Heart right ventricle (tissue), 16 donors: ENCODE measurements at regions of chr3 and their contacts with region 1.

Region 1: DNA sequence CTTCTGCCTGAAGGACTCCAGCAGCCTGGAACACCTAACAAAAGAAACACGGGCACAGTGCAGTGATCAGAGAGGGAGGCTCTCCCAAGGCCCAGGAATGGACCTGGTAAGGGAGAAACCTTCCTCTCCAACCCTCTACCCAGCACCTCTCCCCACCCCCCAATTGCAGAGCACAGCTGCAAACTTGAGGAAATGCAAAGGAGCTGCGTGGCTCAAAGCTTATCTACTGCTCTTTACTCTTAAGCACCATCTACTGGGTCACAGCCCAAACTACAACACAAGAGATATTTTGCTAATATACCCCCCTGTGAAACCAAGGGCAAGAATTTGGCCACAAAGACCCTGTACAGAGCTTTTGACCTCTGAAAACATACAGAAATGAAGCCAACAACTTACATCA is 328.3 kb downstream of the OXSM start:
- DNase-seq: no peak
- ATAC-seq: no peak
- H3K4me3 ChIP-seq: no peak overlapping the region
- H3K27ac ChIP-seq: no peak overlapping the region
- H3K4me1 ChIP-seq: peaks cover 0 to 11% (median 0%) of the 10 kb centered on the region in 9 donors
- H3K27me3 ChIP-seq: no peaks in the 10 kb centered on the region
- CTCF ChIP-seq: peak in 7 of 9 donors; percentile 10 to 51 (median 36)

Region 2: DNA sequence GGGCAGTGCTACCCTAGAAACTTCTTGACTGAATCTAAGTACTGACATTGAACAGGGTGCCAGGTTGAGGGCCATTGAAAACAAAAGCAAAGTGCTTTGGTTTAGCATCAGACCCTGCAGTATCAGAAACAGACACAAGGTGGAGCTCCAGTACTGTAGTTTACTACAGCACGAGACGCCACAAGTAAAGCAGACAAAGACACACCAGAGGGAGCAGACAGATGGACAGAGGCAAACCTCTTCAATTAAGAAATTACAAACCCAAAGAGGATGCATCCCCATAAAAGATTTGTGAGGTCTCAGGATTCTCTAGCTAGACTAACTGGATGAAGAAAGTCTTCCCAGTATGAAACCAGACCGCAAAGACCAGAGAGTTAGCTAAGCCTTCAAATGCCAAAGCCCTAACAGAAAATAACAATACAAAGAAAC is 470.0 kb before region 1 on chr3:
- intact Hi-C with region 1: loop called in 1 of 10 experiments (anchors 10 kb)
- DNase-seq: peak in 1 of 2 donors; percentile 72
- ATAC-seq: peak in 7 of 8 donors; percentile 61 to 92 (median 89)
- H3K4me3 ChIP-seq: no peak overlapping the region
- H3K27ac ChIP-seq: no peak overlapping the region
- H3K4me1 ChIP-seq: peaks cover 0 to 41% (median 21%) of the 10 kb centered on the region in 9 donors
- H3K27me3 ChIP-seq: no peaks in the 10 kb centered on the region
- CTCF ChIP-seq: peak; percentile 62 to 93 (median 88)

Region 3: GRCh38 chr3:25904206-25904605 is 214.0 kb before region 1 on chr3:
- intact Hi-C with region 1: loop called in 9 of 10 experiments (anchors 1 to 10 kb)
- DNase-seq: peak in 1 of 2 donors; percentile 30
- ATAC-seq: peak in 6 of 8 donors; percentile 66 to 92 (median 84)
- H3K4me3 ChIP-seq: no peak overlapping the region
- H3K27ac ChIP-seq: no peak overlapping the region
- H3K4me1 ChIP-seq: peaks cover 0 to 17% (median 0%) of the 10 kb centered on the region in 9 donors
- H3K27me3 ChIP-seq: no peaks in the 10 kb centered on the region
- CTCF ChIP-seq: peak; percentile 21 to 76 (median 61)

Region 4: GRCh38 chr3:26068890-26069289 is 49.3 kb before region 1 on chr3:
- intact Hi-C with region 1: no loop called
- DNase-seq: peak; percentile 7 to 39
- ATAC-seq: peak in 7 of 8 donors; percentile 42 to 97 (median 93)
- H3K4me3 ChIP-seq: no peak overlapping the region
- H3K27ac ChIP-seq: peak overlapping the region in 1 of 10 donors; percentile 41
- H3K4me1 ChIP-seq: peaks cover 0 to 15% (median 3%) of the 10 kb centered on the region in 9 donors
- H3K27me3 ChIP-seq: no peaks in the 10 kb centered on the region
- CTCF ChIP-seq: no peak

Region 5: DNA sequence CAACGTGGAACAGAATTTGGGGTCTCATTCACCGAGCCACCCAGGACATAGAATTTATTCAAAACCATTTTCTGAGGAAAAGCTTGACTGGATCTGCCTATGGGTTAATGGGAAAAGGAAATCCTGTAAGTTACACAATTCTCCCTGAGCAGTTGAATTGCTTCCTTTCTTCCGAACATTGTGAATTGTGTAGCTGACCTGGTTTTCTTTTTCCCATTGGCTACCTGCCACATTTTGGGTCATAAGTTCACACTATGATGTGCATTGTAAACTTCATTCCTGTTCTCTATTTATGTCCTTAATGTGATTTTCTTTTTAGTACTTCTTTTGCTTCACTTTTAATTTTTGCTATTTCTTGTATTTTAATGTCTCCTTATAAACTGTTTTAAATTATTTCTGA is 118.4 kb after region 1 on chr3:
- intact Hi-C with region 1: loop called in 1 of 10 experiments (anchors 5 kb)
- DNase-seq: peak in 1 of 2 donors; percentile 65
- ATAC-seq: peak in 7 of 8 donors; percentile 52 to 94 (median 87)
- H3K4me3 ChIP-seq: no peak overlapping the region
- H3K27ac ChIP-seq: peak overlapping the region in 3 of 10 donors; percentile 2 to 31 (median 2)
- H3K4me1 ChIP-seq: peaks cover 0 to 22% (median 3%) of the 10 kb centered on the region in 9 donors
- H3K27me3 ChIP-seq: no peaks in the 10 kb centered on the region
- CTCF ChIP-seq: no peak

Region 6: GRCh38 chr3:26273196-26273595 is 155.0 kb after region 1 on chr3:
- intact Hi-C with region 1: no loop called
- DNase-seq: no peak
- ATAC-seq: no peak
- H3K4me3 ChIP-seq: no peak overlapping the region
- H3K27ac ChIP-seq: no peak overlapping the region
- H3K4me1 ChIP-seq: peaks cover 0 to 5% (median 0%) of the 10 kb centered on the region in 9 donors
- H3K27me3 ChIP-seq: no peaks in the 10 kb centered on the region
- CTCF ChIP-seq: no peak